PC-3 (cell line): ENCODE measurements at regions of chr3 and their contacts with region 1.

Region 1: DNA sequence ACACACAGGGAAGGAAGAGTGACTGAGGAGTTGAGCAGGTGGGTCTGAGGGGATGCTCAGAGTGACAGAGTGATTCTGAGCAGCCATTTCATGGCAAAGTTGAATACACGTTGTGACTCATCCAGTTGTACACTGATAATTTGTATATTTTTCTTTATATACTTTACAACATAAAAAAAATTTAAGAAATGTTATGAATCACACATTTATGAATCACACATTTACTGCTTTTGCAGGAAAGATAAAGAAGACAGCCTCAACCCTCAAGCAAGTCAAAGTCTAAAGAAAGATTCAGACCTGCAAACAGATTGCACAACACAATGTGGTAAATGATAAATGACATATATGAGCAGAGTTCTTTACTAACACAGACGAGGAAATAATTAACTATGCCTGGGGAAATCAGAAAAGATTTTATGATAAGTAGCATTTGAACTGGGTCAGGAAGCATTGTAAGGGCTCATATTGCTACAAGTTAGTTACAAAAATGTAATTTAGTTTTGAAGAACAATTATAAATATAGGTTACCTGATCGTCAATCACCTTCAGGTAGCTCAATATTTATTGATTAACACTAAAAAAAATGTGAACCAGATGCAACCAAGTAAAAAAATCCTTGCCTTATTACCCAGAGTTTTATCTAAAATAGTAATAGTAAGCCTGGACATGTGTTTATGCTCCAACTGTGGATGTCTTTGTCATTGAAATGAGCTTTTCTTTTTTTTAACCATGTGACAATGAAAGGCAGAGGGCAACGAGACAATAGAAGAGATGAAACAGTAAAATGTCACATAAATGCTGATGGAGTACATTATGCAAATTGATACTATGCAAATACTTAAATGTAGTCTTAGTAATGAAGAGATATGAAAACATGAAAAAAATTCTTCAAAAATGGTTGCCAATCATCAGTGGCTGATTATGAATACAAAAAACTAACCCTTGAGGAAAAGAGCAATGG is 20.8 kb upstream of the CHMP2B start:
- DNase-seq: peak; percentile 98
- ATAC-seq: peak; percentile 82
- H3K4me3 ChIP-seq: peak overlapping the region; percentile 15
- H3K27ac ChIP-seq: peak overlapping the region; percentile 91
- H3K4me1 ChIP-seq: peaks cover 52% of the 10 kb centered on the region
- H3K27me3 ChIP-seq: no peaks in the 10 kb centered on the region
- CTCF ChIP-seq: no peak

Region 2: GRCh38 chr3:86793786-86794185 is 412.6 kb before region 1 on chr3:
- CTCF ChIA-PET with region 1: no interaction called
- POLR2A ChIA-PET with region 1: no interaction called
- intact Hi-C with region 1: loop called (anchors 1 kb)
- DNase-seq: peak; percentile 96
- ATAC-seq: peak; percentile 100
- H3K4me3 ChIP-seq: peak overlapping the region; percentile 33
- H3K27ac ChIP-seq: peak overlapping the region; percentile 80
- H3K4me1 ChIP-seq: peaks cover 22% of the 10 kb centered on the region
- H3K27me3 ChIP-seq: no peaks in the 10 kb centered on the region
- CTCF ChIP-seq: no peak

Region 3: DNA sequence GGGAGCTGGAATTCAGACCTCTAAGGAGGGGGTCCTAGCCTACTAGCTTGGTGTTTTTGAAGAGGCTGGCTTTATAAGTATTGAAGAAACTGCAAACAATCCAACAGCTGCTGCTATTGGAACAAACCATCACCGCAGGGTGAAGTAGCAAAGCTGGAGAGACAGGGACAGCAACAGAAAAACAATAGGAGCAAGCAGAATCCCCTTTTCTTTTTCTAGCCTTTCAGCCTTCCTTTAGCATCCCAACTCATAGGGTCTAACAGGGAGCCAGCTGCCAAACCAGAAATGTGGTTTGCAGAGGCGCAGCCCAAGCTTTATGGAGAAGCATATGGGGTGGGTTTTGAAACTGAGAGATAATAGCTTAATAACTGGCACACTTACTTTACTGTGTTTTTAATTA is 85.5 kb before region 1 on chr3:
- CTCF ChIA-PET with region 1: no interaction called
- POLR2A ChIA-PET with region 1: no interaction called
- intact Hi-C with region 1: loop called (anchors 1 kb)
- DNase-seq: no peak
- ATAC-seq: peak; percentile 8; the same call in 1 of the 2 replicates
- H3K4me3 ChIP-seq: 0 out of 2 replicates have a peak overlapping the region, but pooled peaks have one; percentile 14
- H3K27ac ChIP-seq: peak overlapping the region; percentile 59
- H3K4me1 ChIP-seq: peaks cover 16% of the 10 kb centered on the region
- H3K27me3 ChIP-seq: no peaks in the 10 kb centered on the region
- CTCF ChIP-seq: no peak

Region 4: GRCh38 chr3:87161417-87161816 is 44.9 kb before region 1 on chr3:
- CTCF ChIA-PET with region 1: no interaction called
- POLR2A ChIA-PET with region 1: no interaction called
- intact Hi-C with region 1: no loop called
- DNase-seq: no peak
- ATAC-seq: no peak; the same call in 1 of the 2 replicates
- H3K4me3 ChIP-seq: no peak overlapping the region
- H3K27ac ChIP-seq: no peak overlapping the region
- H3K4me1 ChIP-seq: no peaks in the 10 kb centered on the region
- H3K27me3 ChIP-seq: no peaks in the 10 kb centered on the region
- CTCF ChIP-seq: no peak

Region 5: GRCh38 chr3:87227104-87227834 is 20.9 kb after region 1 on chr3 and contains the start of gene CHMP2B:
- CTCF ChIA-PET with region 1: no interaction called
- POLR2A ChIA-PET with region 1: interaction called, 3 read pairs
- intact Hi-C with region 1: loop called (anchors 1 kb)
- DNase-seq: peak; percentile 96
- ATAC-seq: peak; percentile 83
- H3K4me3 ChIP-seq: peak within 1 kb of the TSS; percentile 87
- H3K27ac ChIP-seq: peak within 1 kb of the TSS; percentile 90
- H3K4me1 ChIP-seq: peaks cover 25% of the 10 kb centered on the region; the same call in 1 of the 2 replicates
- H3K27me3 ChIP-seq: no peaks in the 10 kb centered on the region
- CTCF ChIP-seq: no peak
- total RNA-seq, gene CHMP2B: 40.1 and 49.4 TPM in 2 replicates

Region 6: GRCh38 chr3:87287011-87287410 is 80.7 kb after region 1 on chr3:
- CTCF ChIA-PET with region 1: no interaction called
- POLR2A ChIA-PET with region 1: no interaction called
- intact Hi-C with region 1: loop called (anchors 1 kb)
- DNase-seq: peak; percentile 92
- ATAC-seq: peak; percentile 100
- H3K4me3 ChIP-seq: no peak overlapping the region
- H3K27ac ChIP-seq: peak overlapping the region; percentile 86
- H3K4me1 ChIP-seq: peaks cover 12% of the 10 kb centered on the region
- H3K27me3 ChIP-seq: no peaks in the 10 kb centered on the region
- CTCF ChIP-seq: no peak

Region 7: DNA sequence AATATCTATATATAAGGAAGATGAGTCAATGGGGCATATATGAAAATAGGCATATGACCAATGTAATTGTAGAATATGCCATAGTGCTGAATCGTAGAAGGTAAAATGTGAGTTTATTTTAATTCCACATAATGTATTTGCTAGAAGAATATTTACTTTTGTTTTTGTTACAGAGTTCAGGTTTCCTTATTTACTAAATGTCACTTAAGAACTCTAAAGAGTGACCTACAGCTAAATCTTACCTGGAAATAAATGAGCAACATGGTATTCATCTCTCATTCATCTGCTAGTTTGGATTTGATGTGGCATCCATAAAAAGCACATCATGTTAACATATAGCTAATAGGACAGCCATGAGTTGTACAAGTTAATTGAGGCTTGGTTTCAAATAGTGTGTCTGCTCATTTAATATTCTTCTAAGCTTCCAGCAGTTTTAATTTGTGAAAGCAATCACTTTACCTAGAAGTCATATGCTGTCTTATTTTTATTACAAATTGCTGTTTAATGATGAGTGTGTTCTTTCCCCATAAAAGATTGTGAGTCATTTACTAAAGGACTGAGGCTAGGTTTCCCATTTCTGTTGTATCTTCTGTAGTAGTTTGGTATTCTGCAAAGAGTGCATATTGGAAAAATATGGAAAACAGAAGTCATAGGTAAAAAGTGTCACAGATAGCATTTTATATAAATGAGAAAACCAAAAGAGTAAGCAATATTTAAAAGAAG is 292.2 kb after region 1 on chr3:
- CTCF ChIA-PET with region 1: no interaction called
- POLR2A ChIA-PET with region 1: no interaction called
- intact Hi-C with region 1: no loop called
- DNase-seq: peak; percentile 71
- ATAC-seq: peak; percentile 80
- H3K4me3 ChIP-seq: peak overlapping the region; percentile 8; the same call in 1 of the 2 replicates
- H3K27ac ChIP-seq: peak overlapping the region; percentile 65
- H3K4me1 ChIP-seq: peaks cover 43% of the 10 kb centered on the region
- H3K27me3 ChIP-seq: no peaks in the 10 kb centered on the region
- CTCF ChIP-seq: no peak

Region 8: DNA sequence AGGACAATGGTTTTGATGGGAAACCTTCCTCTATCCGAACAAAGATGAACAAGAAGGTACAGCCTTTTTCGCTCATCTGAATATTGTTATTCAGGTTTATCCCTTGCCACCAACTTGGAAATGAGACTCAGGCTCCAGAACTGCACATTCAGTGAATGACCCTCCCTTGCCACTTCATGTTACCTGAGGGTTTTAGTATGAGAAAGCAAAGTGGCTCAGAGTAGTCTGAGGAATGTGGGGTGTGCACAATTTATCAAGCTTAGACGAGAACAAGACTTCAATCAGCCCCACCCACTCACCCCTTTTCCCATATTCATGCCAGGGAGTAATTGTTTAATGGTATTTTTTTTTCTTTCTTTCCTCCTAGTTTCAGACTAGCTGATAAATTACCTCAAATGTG is 335.4 kb after region 1 on chr3:
- CTCF ChIA-PET with region 1: no interaction called
- POLR2A ChIA-PET with region 1: no interaction called
- intact Hi-C with region 1: no loop called
- DNase-seq: no peak
- ATAC-seq: no peak
- H3K4me3 ChIP-seq: no peak overlapping the region
- H3K27ac ChIP-seq: no peak overlapping the region
- H3K4me1 ChIP-seq: no peaks in the 10 kb centered on the region
- H3K27me3 ChIP-seq: no peaks in the 10 kb centered on the region
- CTCF ChIP-seq: no peak